Activated T-helper 1 cell treated with anti-CD3 and anti-CD28 coated beads, Interleukin-12 subunit alpha, Interleukin-12 subunit beta, Interleukin-2, Interleukin-4 antibody, amounts not matched to agents 30 ng/mL and 10 ng/mL and 1 ng/mL, durations not matched to agents 14 hours and 24 hours and 36 hours (primary cell): ENCODE measurements at regions of chr11 and their contacts with region 1.

Region 1: GRCh38 chr11:103326070-103326794 is 217.0 kb downstream of the DYNC2H1 start:
- DNase-seq: no peak
- H3K4me3 Mint-ChIP-seq: no peak overlapping the region
- H3K27ac Mint-ChIP-seq: no peak overlapping the region
- H3K4me1 Mint-ChIP-seq: peaks cover 7% of the 10 kb centered on the region
- H3K27me3 Mint-ChIP-seq: peaks cover 4% of the 10 kb centered on the region

Region 2: DNA sequence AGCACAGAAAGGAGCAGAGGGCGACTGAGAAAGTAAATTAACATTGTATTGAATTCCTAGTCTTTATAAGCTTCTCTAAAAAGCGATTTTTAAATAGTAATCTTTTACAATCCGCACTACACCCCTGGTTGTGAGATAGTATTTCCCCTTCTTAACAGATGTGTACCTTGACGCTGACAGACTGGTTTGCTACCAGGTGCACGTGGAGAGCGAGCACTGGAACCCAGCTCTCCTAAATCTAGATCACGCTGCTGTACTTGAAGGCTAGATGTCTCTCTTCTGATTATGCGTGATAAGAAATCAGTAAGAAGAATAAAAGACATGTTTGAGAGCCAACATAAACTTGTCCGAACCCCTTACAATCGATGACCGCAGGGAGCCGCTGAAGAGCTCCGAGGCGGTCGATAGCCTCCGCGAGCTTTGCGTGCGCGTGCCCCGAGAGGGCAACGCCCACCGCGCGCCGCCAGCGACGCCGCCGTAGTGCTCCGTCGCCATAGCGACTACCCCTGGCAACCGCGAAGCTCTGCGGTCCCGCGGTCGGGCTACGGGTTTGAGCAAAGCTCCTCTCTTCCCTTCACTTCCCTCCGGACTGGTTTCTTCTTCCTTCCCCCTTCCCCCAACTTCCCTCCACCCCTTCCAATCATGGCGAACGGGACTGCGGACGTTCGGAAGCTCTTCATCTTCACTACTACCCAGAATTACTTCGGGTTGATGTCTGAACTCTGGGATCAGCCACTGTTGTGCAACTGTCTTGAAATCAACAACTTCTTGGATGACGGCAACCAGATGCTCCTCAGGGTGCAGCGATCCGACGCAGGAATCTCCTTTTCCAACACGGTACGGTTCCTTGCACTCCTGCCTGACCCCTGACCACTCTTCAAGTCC is 217.1 kb before region 1 on chr11 and contains the start of gene DYNC2H1:
- intact Hi-C with region 1: loop called (anchors 5 kb)
- DNase-seq: peak; percentile 87
- H3K4me3 Mint-ChIP-seq: peak within 1 kb of the TSS; percentile 92
- H3K27ac Mint-ChIP-seq: peak within 1 kb of the TSS; percentile 90
- H3K4me1 Mint-ChIP-seq: peaks cover 8% of the 10 kb centered on the region
- H3K27me3 Mint-ChIP-seq: peaks cover 35% of the 10 kb centered on the region
- total RNA-seq, gene DYNC2H1: 0.91 and 1.1 TPM in 2 replicates

Region 3: DNA sequence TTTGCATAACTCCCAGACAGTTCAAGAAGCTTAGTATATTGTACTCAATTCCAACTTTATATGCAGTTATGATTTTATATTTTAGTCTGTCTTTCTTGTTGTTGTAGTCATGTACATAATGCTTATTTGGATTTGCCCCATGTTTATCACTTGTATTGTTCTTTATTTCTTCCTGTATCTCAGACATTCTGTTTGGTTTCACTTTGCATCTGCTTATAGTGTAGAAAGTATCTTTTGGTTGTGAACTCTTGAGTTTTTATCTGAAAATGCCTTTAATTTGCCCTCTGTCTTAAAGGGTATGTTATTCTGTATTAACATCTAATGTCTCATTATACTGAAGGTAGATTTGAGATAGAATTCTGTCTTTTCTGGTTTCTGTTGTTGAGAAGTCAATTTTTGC is 58.4 kb after region 1 on chr11:
- intact Hi-C with region 1: no loop called
- DNase-seq: no peak
- H3K4me3 Mint-ChIP-seq: no peak overlapping the region
- H3K27ac Mint-ChIP-seq: no peak overlapping the region
- H3K4me1 Mint-ChIP-seq: no peaks in the 10 kb centered on the region
- H3K27me3 Mint-ChIP-seq: no peaks in the 10 kb centered on the region

Region 4: DNA sequence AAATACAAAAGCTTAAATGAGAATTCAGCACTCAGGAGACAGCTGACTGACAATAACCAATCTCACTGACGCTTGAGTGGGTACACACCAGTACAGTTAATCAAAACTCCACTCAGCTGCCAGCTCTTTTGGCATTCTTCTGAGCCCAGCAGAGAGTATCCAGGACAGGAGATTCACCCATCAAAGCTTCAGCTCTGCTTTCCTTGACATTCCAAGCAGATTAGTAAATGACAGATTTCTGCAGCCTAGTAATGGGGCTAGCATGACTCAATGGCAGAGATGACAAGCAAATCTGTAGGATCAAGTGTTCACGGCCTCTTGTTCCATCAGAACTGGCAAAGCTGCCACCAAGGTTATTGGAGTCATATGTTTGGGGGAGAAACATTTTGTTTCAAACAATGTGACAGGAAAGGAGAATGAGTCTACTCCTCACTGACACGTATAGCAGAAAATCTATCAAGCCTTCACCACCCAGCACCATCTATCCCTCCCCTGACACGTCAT is 203.0 kb after region 1 on chr11:
- intact Hi-C with region 1: no loop called
- DNase-seq: no peak
- H3K4me3 Mint-ChIP-seq: no peak overlapping the region
- H3K27ac Mint-ChIP-seq: no peak overlapping the region
- H3K4me1 Mint-ChIP-seq: no peaks in the 10 kb centered on the region
- H3K27me3 Mint-ChIP-seq: no peaks in the 10 kb centered on the region